ENCODE measurements at regions of chr17 and their contacts with region 1.

Region 1: DNA sequence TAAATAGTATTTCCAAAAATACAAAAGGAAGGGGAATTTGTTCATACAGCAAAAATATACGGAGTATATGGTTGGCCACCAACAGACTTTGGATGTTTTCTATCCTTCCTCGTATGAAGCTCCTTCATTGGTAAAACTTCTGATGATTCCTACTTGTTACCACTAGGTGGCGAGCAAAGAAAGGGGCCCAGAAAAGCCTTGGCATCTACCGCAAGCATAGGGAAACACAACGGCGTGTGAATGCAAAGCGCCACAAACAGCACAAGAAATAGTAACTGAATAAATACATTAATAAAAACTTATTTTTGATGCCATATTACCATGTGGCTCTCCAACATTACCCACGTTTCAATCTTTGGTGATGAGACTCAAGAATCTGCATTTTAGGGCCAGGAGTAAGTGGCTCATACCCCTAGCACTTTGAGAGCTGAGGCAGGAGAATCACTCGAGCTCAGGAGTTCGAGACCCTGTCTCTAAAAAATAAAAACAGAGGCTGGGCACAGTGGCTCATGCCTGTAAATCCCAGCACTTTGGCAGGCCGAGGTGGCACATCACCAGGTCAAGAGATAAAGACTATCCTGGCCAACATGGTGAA is 34.5 kb downstream of the YWHAE start:
- DNase-seq: peak; percentile 44 to 88
- ATAC-seq: peak; percentile 80 to 90 (median 84)
- H3K4me3 ChIP-seq: no peak overlapping the region
- H3K4me3 Mint-ChIP-seq: peak overlapping the region; percentile 9
- H3K27ac ChIP-seq: peak overlapping the region; percentile 45
- H3K27ac Mint-ChIP-seq: peak overlapping the region; percentile 60 to 72
- H3K4me1 ChIP-seq: peaks cover 38% of the 10 kb centered on the region
- H3K4me1 Mint-ChIP-seq: peaks cover 48 to 58% of the 10 kb centered on the region in 2 donors
- H3K27me3 ChIP-seq: no peaks in the 10 kb centered on the region
- H3K27me3 Mint-ChIP-seq: no peaks in the 10 kb centered on the region
- CTCF ChIP-seq: peak; percentile 80

Region 2: DNA sequence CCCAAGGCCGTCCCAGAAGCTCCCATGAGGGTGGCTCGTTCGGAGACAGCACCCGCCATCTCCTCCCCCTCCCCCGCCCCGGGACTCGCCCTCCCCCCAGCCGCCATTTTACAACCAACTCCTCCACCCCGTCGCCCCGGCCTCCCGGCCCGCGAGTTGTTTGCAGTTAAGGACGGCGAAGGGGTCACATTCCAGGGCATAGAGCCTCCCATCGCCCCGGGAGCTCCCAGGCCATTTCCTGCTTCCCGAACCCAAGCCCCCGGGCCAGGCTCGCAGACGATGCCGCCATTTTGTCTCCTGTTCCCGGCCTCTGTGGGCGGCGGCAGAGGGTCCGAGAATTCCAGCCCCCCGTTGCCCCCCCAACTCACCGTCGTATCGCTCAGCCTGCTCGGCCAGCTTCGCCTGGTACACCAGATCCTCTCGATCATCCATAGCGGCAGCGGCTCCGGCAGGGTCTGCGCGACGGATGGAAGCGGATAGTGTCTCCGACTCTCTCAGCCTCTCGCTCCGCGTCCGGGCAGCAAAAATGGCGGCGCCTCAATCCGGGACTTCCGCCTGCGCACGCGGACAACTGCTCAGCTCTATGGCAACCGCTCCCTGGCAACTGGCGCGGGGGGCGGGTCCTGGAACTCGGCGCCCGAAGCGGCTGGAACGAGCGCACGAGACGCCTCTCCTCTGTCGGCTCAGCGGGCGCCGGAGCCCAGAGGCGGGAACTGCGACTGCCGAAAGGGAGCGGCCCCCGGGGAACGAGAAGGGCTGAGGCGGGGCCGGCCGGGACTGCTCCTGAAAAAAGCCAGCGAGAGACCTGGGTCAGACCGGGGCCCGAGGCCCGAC is 34.4 kb after region 1 on chr17 and contains the start of gene YWHAE:
- intact Hi-C with region 1: loop called (anchors 2 kb)
- DNase-seq: peak; percentile 93 to 96
- ATAC-seq: peak; percentile 86 to 95 (median 91)
- H3K4me3 ChIP-seq: peak within 1 kb of the TSS; percentile 92
- H3K4me3 Mint-ChIP-seq: peak within 1 kb of the TSS; percentile 99
- H3K27ac ChIP-seq: peak within 1 kb of the TSS; percentile 89
- H3K27ac Mint-ChIP-seq: peak within 1 kb of the TSS; percentile 98
- H3K4me1 ChIP-seq: peaks cover 15% of the 10 kb centered on the region
- H3K4me1 Mint-ChIP-seq: peaks cover 33 to 44% of the 10 kb centered on the region in 2 donors
- H3K27me3 ChIP-seq: no peaks in the 10 kb centered on the region
- H3K27me3 Mint-ChIP-seq: no peaks in the 10 kb centered on the region
- CTCF ChIP-seq: no peak
- total RNA-seq, gene YWHAE: 116 to 134 (median 132) TPM

Region 3: DNA sequence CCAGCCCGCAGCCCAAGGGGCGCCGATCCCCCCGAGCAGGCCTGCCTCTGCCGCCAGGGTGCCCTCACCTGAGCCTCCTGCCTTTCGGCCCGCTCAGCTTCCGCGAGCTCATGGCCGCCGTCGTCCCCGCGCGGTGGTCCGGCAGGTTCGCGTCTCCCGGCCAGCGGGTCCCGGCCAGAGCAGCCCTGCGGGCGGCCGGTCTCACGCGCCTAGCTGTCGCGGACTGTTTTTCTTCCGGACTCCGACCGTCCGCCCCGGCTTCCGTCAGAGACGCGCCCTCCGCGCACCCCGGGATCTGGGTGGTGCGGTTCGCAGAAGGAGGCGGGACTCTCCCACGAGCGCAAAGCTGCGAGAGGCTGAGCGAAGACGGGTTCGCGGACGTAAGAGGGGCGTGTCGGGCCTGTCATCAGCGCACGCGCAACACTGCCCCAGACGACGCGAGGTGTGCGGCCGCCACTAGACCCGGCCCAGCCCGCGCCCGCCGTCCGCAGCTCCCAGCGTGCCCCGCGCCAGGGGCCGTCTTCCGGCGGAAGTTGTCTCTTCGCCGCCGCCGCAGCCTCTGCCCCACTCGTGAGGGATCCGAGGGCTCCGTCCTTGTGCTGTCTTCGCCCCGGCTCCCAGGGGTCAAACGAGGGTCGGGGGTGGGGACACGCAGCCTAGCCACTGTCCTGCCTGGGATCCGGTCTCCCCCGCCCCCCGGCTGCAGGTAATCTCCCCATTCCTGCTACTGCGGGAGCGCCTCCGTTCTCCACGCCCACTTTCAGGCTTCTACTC is 151.0 kb after region 1 on chr17 and contains the start of gene INPP5K:
- intact Hi-C with region 1: loop called (anchors 1 kb)
- DNase-seq: peak; percentile 97 to 100
- ATAC-seq: peak; percentile 89 to 98 (median 89)
- H3K4me3 ChIP-seq: peak within 1 kb of the TSS; percentile 96
- H3K4me3 Mint-ChIP-seq: peak within 1 kb of the TSS; percentile 95
- H3K27ac ChIP-seq: peak within 1 kb of the TSS; percentile 78
- H3K27ac Mint-ChIP-seq: peak within 1 kb of the TSS; percentile 89 to 94
- H3K4me1 ChIP-seq: peaks cover 25% of the 10 kb centered on the region
- H3K4me1 Mint-ChIP-seq: peaks cover 11 to 23% of the 10 kb centered on the region in 2 donors
- H3K27me3 ChIP-seq: no peaks in the 10 kb centered on the region
- H3K27me3 Mint-ChIP-seq: no peaks in the 10 kb centered on the region
- CTCF ChIP-seq: no peak
- total RNA-seq, gene INPP5K: 278 to 317 (median 292) TPM

Measured in natural killer cell (primary cell).